ENCODE measurements at regions of chr15 and their contacts with region 1.

Region 1: GRCh38 chr15:71611551-71612396 is 198.6 kb upstream of the NR2E3 start:
- DNase-seq: no peak
- ATAC-seq: no peak
- H3K4me3 ChIP-seq: no peak overlapping the region
- H3K4me3 Mint-ChIP-seq: no peak overlapping the region
- H3K27ac ChIP-seq: no peak overlapping the region
- H3K27ac Mint-ChIP-seq: no peak overlapping the region
- H3K4me1 ChIP-seq: no peaks in the 10 kb centered on the region
- H3K4me1 Mint-ChIP-seq: no peaks in the 10 kb centered on the region
- H3K27me3 ChIP-seq: no peaks in the 10 kb centered on the region
- H3K27me3 Mint-ChIP-seq: peaks cover 17% of the 10 kb centered on the region
- CTCF ChIP-seq: no peak

Region 2: DNA sequence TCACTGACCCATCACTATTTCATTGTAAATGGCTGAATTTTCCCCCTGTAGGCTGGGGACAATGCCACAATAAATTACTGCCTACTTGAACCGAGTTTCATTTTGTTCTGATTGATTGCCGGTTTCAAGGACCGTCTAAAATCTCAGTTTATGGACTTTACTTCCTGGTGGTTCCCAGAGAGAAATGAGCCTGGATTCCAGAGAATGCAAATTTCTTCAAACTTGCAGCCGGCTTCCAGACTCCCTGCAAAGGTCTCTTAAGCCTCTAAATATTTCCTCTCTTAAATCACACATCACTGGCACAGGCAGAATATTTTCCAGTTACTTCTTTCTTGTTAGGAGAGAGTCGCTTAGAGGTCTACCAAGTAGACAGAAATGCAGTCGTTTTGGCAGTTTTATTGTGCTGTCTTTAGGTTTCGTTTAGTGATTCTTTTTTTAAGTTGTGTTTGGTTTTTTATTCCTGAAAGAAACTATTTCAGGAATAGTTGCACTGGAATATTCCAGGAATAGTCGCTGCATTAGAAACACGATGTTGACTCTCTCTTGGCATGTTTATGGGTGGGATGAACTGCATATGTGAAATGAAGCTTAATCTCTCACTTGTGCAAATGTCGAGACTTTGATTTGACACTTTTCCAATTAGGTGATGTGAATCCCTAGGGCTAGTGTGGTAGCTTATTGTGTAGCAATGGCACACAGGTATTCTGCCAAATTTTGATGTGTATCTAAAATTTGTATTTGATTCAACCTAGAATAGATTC is 85.5 kb before region 1 on chr15:
- CTCF ChIA-PET with region 1: no interaction called
- POLR2A ChIA-PET with region 1: no interaction called
- intact Hi-C with region 1: no loop called
- DNase-seq: no peak
- ATAC-seq: no peak
- H3K4me3 ChIP-seq: no peak overlapping the region
- H3K4me3 Mint-ChIP-seq: no peak overlapping the region
- H3K27ac ChIP-seq: no peak overlapping the region
- H3K27ac Mint-ChIP-seq: no peak overlapping the region
- H3K4me1 ChIP-seq: no peaks in the 10 kb centered on the region
- H3K4me1 Mint-ChIP-seq: no peaks in the 10 kb centered on the region
- H3K27me3 ChIP-seq: peaks cover 0 to 13% (median 6%) of the 10 kb centered on the region in 4 experiments
- H3K27me3 Mint-ChIP-seq: peaks cover 38% of the 10 kb centered on the region
- CTCF ChIP-seq: no peak

Region 3: GRCh38 chr15:71687902-71688508 is 76.2 kb after region 1 on chr15:
- CTCF ChIA-PET with region 1: interaction called, 11 read pairs
- POLR2A ChIA-PET with region 1: no interaction called
- intact Hi-C with region 1: no loop called
- DNase-seq: no peak
- ATAC-seq: no peak
- H3K4me3 ChIP-seq: no peak overlapping the region
- H3K4me3 Mint-ChIP-seq: no peak overlapping the region
- H3K27ac ChIP-seq: no peak overlapping the region
- H3K27ac Mint-ChIP-seq: no peak overlapping the region
- H3K4me1 ChIP-seq: no peaks in the 10 kb centered on the region
- H3K4me1 Mint-ChIP-seq: no peaks in the 10 kb centered on the region
- H3K27me3 ChIP-seq: peaks cover 0 to 3% (median 0%) of the 10 kb centered on the region in 4 experiments
- H3K27me3 Mint-ChIP-seq: peaks cover 39% of the 10 kb centered on the region
- CTCF ChIP-seq: no peak

Measured in B cell (primary cell).